ENCODE measurements at regions of chr10 and their contacts with region 1.

Region 1: DNA sequence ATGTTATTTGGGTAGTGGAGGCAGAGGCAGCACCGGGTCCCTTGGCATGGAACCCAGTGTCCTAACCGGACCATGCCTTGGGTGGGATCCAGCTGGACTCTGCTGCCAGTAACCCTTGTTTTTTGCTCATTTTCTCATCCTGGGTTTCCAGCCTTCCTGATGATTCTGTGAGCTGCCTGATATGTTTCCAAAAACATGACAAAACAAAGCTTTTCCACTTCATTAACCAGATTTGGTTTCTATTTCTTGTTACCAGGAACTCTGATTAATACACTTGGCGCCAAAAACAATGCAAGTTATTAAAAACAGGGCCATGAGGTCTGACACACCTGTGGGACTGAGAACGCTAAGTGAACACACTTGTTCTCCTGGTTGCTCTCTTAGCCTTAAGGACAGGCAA is 32.8 kb upstream of the DLG5 start:
- DNase-seq: no peak
- H3K4me3 ChIP-seq: no peak overlapping the region
- H3K27ac ChIP-seq: no peak overlapping the region
- H3K4me1 ChIP-seq: peaks cover 0 to 6% (median 0%) of the 10 kb centered on the region in 4 experiments; a peak in 1 of 7 replicates
- H3K27me3 ChIP-seq: no peaks in the 10 kb centered on the region
- CTCF ChIP-seq: no peak
- EP300 ChIP-seq: no peak
- POLR2A ChIP-seq: no peak
- RAD21 ChIP-seq: no peak

Region 2: DNA sequence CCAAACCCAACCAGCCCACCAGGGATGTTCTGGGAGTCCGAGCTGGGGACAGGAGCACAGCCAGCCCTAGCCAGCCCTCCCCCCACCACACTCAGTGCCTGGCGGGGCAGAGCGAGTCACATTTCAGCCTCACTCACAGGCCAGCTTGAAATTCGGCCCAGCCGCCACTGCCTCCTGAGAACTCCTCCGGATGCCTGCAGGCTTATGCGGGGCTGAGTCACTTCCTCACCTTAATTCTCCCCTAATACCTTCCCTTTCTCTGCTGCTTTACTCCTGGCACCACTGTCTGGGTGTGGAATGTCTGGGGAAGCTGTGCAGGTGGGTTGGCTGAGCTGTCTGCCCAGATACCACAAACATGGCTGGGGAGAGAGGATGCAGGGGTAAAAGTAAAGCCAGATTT is 10.2 kb before region 1 on chr10:
- CTCF ChIA-PET with region 1: interaction called, 12 read pairs
- POLR2A ChIA-PET with region 1: interaction called, 3 read pairs
- DNase-seq: peak; percentile 79 to 82
- H3K4me3 ChIP-seq: peak overlapping the region in 1 of 4 experiments; percentile 12; a peak in 2 of 8 replicates
- H3K27ac ChIP-seq: peak overlapping the region; percentile 52; the same call in 1 of the 2 replicates
- H3K4me1 ChIP-seq: peaks cover 8 to 13% (median 11%) of the 10 kb centered on the region in 4 experiments
- H3K27me3 ChIP-seq: no peaks in the 10 kb centered on the region
- CTCF ChIP-seq: no peak
- EP300 ChIP-seq: no peak
- POLR2A ChIP-seq: peak; percentile 48 to 56; a peak in 2 of 3 replicates
- RAD21 ChIP-seq: no peak